Ovary (tissue), 10 donors: ENCODE measurements at regions of chr3 and their contacts with region 1.

Region 1: DNA sequence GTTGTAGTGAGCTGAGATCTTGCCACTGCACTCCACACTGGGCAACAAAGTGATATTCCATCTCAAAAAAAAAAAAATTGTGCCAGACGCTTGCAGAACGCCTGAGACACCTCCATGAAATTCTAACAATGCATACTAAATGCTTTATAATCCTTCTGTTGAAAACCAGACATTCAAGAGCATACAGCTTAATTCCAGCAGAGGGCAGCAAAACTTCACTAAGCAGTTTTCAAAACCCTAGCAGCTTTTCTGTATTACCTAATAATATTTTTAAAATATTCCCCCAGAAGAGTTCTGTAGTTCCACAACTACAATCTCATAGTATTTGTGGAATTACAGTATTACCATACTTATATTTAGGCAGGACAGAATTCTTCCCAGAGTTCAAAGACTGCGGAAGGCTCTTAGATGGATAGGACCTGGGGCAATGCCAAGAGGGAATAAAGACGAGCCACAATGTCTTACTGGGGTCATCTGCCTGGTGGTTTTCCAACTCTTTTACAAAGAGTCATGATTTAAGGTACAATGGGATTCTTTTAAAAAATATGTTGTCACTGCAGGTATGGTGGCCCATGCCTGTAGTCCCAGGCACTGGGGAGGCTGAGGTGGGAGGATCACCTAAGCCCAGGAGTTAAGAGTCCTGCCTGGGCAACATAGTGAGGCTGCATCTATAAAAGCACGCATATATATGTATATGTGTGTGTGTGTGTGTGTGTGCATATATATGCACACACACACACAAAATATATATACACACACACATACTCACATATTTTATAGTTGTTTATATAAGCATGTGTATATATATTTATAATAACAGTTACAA is 19.6 kb upstream of the TASOR start:
- DNase-seq: peak in 2 of 5 donors; percentile 34 to 68
- H3K4me3 ChIP-seq: no peak overlapping the region
- H3K27ac ChIP-seq: no peak overlapping the region
- H3K4me1 ChIP-seq: no peaks in the 10 kb centered on the region
- H3K27me3 ChIP-seq: no peaks in the 10 kb centered on the region
- CTCF ChIP-seq: peak; percentile 79 to 91 (median 91)
- EP300 ChIP-seq: no peak
- POLR2A ChIP-seq: no peak

Region 2: DNA sequence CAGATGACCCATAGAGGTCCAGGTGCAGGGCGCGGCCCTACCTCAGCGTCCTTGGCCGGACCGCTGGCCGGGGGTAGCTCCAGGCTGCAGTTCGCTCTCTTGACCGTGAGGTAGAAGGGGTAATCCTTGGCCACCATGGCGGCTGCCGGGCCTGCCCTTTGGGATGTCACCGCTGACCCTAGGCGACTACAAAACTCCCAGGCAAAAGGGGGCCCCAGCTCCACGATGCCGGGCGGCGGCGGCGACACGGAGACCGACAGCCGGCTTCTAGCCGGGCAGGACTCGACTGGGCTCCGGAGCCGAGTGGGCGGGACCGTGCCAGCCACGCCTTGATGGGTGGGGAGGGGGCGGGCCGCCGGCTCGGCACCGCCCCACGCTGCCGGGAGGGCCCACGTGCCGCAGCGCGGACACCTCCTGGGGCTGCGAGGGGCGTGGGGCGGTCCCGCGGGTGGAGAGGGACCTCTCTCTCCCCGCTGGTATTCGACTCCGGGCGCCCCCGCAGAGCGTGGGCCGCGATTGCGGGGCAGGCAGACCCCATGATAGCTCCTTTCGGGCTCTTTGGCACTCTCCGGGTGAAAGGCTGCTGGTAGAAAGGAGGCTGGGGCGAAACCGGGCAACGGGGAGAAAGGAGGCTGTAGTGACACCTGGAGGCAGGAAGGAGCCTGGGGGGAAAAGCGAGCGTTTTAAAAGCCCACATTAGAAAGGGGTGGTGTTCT is 99.1 kb after region 1 on chr3 and contains the start of gene ARHGEF3:
- intact Hi-C with region 1: loop called (anchors 2 to 10 kb)
- DNase-seq: peak; percentile 83 to 92 (median 90)
- H3K4me3 ChIP-seq: peak within 1 kb of the TSS; percentile 75
- H3K27ac ChIP-seq: peak within 1 kb of the TSS; percentile 45 to 68
- H3K4me1 ChIP-seq: peaks cover 2% of the 10 kb centered on the region
- H3K27me3 ChIP-seq: no peaks in the 10 kb centered on the region
- CTCF ChIP-seq: no peak
- EP300 ChIP-seq: no peak
- POLR2A ChIP-seq: peak; percentile 90
- total RNA-seq, gene ARHGEF3: 23.5 to 48.1 (median 39.5) TPM

Region 3: DNA sequence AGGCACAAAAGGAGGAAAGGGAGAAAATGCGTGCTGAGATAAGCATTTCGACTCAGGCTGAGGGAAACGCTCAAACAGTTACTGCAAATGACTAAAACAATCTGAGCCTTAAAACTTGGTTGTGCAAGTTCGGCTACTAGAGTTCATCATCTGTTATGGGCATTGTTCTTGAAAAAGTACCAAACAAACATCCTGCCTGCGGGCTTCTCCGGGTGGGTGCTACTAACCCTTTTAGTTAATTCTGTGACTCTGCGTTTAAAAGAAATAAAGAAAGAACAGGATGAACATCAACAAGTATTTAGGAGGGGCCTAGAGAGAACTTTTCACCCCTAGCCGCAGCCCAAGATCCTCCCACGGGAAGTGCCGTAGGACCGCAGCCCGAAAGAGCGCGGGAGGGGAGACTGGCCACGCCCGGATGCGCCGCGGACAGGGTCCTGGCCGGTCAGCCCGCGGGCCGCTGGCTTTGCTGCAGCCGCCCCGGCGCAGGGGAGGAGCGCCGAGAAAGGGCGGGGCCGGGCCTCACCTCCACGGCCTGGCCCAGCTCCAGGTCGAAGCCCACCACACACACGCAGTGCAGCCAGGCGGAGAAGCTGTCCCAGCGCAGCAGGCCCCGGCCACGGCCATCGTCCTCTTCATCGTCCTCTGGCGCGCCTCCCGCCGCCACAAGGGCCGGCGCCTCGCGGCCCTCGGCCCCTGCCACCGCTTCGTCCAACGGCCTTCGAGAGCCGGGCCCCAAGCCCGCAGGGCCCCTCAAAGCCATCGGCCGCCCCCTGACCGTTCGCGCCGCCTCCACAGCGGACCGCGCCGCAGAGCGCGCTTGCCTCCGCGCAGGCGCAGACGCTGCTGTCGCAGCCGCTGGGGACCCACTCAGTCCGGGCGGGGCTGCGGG is 989.8 kb after region 1 on chr3 and contains the start of gene DENND6A:
- intact Hi-C with region 1: no loop called
- DNase-seq: peak; percentile 93 to 96 (median 95)
- H3K4me3 ChIP-seq: peak within 1 kb of the TSS; percentile 100
- H3K27ac ChIP-seq: peak within 1 kb of the TSS; percentile 98 to 99
- H3K4me1 ChIP-seq: peaks cover 11% of the 10 kb centered on the region
- H3K27me3 ChIP-seq: no peaks in the 10 kb centered on the region
- CTCF ChIP-seq: no peak
- EP300 ChIP-seq: no peak
- POLR2A ChIP-seq: peak; percentile 99
- total RNA-seq, gene DENND6A: 17.8 to 52.4 (median 39.9) TPM